Prostate gland (tissue), 2 donors: ENCODE measurements at regions of chr9 and their contacts with region 1.

Region 1: GRCh38 chr9:71768388-71769174 is at the start of gene CEMIP2:
- DNase-seq: peak; percentile 89
- H3K4me3 ChIP-seq: peak within 1 kb of the TSS; percentile 79 to 85
- H3K27ac ChIP-seq: peak within 1 kb of the TSS; percentile 97 to 98
- H3K4me1 ChIP-seq: no peaks in the 10 kb centered on the region
- H3K27me3 ChIP-seq: no peaks in the 10 kb centered on the region
- CTCF ChIP-seq: peak in 2 of 4 experiments; percentile 33 to 54
- POLR2A ChIP-seq: peak; percentile 91
- total RNA-seq, gene CEMIP2: 20.4 to 86.5 TPM

Region 2: DNA sequence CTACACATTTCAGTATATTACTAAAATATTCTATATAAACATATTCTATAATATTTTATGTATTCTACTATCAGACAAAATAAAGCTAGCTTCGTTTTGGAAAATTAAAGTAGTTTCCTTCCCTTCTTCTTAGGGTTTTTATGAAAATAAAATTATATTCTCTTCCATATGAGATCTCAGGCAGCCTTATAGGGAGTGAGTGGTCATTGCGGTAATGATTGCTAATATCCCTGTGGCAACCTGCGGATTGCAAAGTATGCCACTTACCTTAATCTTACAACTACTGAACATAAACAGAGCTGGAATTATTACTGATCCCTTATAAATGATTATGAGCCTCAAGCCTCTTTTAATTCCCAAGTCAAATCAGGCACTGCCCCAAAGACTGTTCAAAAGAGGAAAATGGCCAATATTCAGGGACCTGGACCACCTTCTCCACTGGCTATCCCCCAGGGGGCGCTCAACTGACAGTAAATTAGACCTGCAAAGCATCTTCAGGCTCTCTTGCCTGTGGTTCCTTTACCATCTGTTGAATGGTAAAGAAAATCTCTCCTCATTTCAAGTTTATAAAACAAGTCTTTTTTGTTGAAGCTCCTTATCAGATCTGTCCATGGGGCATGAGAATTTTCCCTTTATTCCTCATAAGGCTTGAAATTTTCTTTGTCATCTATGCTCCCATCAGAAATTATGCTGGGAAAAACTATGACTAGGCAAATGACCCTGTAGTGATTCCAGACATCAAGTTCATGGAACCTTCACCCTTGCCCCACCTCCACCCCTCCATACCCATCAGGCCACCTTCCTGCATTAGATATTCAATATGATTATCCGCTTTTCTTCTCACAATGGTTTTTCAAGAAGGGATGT is 164.2 kb before region 1 on chr9:
- intact Hi-C with region 1: loop called (anchors 10 kb)
- DNase-seq: peak; percentile 69
- H3K4me3 ChIP-seq: no peak overlapping the region
- H3K27ac ChIP-seq: no peak overlapping the region
- H3K4me1 ChIP-seq: no peaks in the 10 kb centered on the region
- H3K27me3 ChIP-seq: no peaks in the 10 kb centered on the region
- CTCF ChIP-seq: peak; percentile 37 to 83 (median 75)
- POLR2A ChIP-seq: no peak

Region 3: DNA sequence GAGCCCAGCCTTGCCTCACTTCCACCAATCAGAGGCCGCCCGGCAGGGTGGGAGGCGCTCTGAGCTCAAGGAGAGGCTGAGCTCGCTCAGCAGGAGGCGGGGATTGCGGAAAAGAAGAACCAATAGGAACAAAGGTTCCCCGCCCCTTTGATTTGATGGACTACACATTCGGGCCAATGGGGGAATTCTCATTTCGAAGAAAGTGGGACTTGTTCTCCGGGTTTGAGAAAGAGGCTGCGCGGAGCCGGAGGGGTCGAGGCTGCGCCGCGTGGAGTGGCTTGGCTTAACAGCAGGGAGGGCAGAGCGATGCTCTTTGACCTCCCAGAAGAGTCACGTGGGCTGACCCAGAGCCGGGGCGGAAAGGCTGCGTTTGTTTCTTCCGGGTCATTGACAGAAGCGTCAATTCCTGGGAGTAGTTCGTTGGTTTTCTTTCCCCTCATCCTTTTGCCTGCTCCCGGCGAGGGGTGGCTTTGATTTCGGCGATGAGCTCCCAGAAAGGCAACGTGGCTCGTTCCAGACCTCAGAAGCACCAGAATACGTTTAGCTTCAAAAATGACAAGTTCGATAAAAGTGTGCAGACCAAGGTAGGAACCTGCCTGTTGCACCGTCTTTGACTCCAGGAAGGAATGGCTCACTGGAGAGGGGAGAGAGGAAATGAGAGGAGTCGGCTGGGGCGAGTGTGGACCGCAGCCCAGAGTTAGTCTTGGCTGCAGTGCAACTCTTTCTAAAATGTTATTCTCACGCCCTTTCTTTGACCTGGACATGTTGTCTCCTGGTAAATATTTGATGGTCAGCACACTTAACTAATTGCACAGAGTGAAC is 142.9 kb after region 1 on chr9 and contains the start of gene C9orf85:
- intact Hi-C with region 1: loop called (anchors 2 kb)
- DNase-seq: peak; percentile 99
- H3K4me3 ChIP-seq: peak within 1 kb of the TSS; percentile 96
- H3K27ac ChIP-seq: peak within 1 kb of the TSS; percentile 93 to 95
- H3K4me1 ChIP-seq: no peaks in the 10 kb centered on the region
- H3K27me3 ChIP-seq: no peaks in the 10 kb centered on the region
- CTCF ChIP-seq: peak in 1 of 4 experiments; percentile 30
- POLR2A ChIP-seq: no peak
- total RNA-seq, gene C9orf85: 20.1 to 21.4 TPM

Region 4: GRCh38 chr9:72383978-72384709 is 615.6 kb after region 1 on chr9:
- intact Hi-C with region 1: no loop called
- DNase-seq: no peak
- H3K4me3 ChIP-seq: no peak overlapping the region
- H3K27ac ChIP-seq: no peak overlapping the region
- H3K4me1 ChIP-seq: no peaks in the 10 kb centered on the region
- H3K27me3 ChIP-seq: no peaks in the 10 kb centered on the region
- CTCF ChIP-seq: no peak
- POLR2A ChIP-seq: no peak